ENCODE measurements at regions of chr2 and their contacts with region 1.

Region 1: DNA sequence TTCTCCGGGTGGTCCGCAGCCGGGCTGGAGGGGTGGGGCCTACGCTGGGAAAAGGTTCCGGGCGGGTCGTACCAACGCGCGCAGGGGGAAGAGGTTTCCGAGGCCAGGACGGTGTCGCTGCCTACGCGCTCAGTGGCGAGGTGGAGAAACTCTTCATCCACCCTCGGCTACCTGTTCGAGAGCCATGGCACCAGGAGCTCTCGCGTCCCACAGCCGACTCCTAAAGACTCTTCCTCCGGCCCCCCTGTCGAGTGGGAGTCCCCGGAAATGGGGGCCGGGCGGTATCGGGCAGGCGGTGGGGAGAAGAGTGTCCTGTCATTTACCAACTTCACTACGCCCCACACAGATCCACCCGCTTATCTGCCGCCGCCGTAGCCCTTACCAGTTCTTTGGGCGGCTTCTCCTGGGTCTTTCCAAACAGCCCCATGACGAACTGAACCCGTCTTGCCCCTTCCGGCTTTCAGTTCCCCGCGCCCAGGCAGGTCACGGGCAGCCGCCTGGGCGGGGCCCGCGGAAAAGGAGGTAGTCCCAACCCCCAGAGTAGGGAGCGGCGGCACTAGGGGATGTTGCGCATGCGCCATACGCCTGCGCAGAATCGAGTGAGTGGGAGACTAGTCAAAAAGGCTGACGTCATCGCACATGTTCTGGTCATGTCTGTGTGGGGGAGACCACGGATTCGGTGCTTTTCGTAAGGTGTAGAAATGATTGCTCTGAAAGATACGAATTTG is at the start of gene CHMP3:
- DNase-seq: peak; percentile 97
- H3K4me3 Mint-ChIP-seq: peak within 1 kb of the TSS; percentile 92
- H3K27ac Mint-ChIP-seq: peak within 1 kb of the TSS; percentile 99
- H3K4me1 Mint-ChIP-seq: peaks cover 25% of the 10 kb centered on the region
- H3K27me3 Mint-ChIP-seq: no peaks in the 10 kb centered on the region
- total RNA-seq, gene CHMP3: 27.0 to 29.6 TPM

Region 2: DNA sequence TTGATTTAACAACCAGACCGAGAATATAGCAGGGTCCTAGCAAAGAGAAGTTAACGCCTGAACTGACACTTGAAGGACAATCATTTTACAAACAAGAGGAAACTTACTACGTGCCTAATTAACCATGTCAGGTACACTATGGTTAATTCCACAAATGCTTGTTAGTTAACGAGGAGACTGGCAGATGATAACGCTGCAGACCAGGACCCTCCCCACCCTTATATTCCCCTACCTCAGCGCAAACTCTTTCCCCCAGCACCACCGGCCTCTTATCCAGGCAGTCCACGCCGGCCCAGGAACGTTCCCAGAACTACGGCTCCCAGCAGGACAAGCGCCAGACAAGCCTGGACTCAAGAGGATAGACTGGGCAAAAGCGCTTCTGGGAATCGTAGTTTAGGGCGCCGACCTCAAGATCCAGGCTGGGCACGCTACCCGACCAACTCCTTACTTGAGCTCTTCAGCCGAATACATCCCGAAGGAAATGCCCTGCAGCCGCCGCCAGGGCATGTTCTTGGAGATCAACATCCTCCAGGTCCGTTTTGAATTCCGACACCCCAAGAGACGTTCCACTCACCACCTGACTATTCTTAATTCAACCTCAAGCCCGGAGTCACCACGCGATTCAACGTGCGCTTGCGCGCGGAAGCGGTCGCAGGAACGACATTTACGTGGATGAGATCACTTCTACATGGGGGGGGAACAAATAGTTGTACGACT is 457.7 kb before region 1 on chr2 and contains the start of gene POLR1A:
- CTCF ChIA-PET with region 1: no interaction called
- intact Hi-C with region 1: loop called (anchors 10 kb)
- DNase-seq: peak; percentile 87
- H3K4me3 Mint-ChIP-seq: peak within 1 kb of the TSS; percentile 89
- H3K27ac Mint-ChIP-seq: peak within 1 kb of the TSS; percentile 99
- H3K4me1 Mint-ChIP-seq: peaks cover 57% of the 10 kb centered on the region
- H3K27me3 Mint-ChIP-seq: no peaks in the 10 kb centered on the region
- total RNA-seq, gene POLR1A: 25.3 to 27.1 TPM

Region 3: DNA sequence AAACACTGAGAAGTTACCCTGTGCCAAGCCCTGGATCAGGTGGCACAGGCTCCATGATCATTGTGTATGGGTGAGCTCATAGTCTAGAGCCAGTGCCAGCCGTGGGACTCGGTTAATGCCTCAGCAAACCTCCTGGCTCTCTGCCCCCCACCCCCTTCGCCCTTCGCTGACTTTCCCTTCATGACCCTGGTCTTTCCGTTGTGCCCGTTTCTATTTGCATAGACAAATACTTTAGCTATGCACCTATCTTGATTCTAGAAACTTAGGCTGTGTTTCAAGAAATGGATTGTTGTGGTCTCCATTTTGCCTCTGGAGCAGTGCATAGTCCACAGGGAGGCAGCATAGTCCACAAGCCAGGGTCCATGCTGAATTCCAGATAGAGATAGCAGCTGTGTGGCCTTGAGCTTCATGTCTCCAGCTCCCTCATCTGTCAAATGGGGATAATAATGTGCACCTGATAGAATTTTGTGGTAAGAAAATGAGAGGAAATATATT is 166.7 kb before region 1 on chr2:
- CTCF ChIA-PET with region 1: no interaction called
- intact Hi-C with region 1: loop called (anchors 5 kb)
- DNase-seq: peak; percentile 57
- H3K4me3 Mint-ChIP-seq: no peak overlapping the region
- H3K27ac Mint-ChIP-seq: peak overlapping the region; percentile 15
- H3K4me1 Mint-ChIP-seq: peaks cover 17% of the 10 kb centered on the region
- H3K27me3 Mint-ChIP-seq: no peaks in the 10 kb centered on the region

Region 4: GRCh38 chr2:86480105-86480504 is 83.0 kb before region 1 on chr2:
- CTCF ChIA-PET with region 1: no interaction called
- intact Hi-C with region 1: loop called (anchors 5 kb)
- DNase-seq: no peak
- H3K4me3 Mint-ChIP-seq: no peak overlapping the region
- H3K27ac Mint-ChIP-seq: no peak overlapping the region
- H3K4me1 Mint-ChIP-seq: peaks cover 50% of the 10 kb centered on the region
- H3K27me3 Mint-ChIP-seq: no peaks in the 10 kb centered on the region

Region 5: GRCh38 chr2:86552889-86553288 is 10.2 kb before region 1 on chr2:
- CTCF ChIA-PET with region 1: no interaction called
- intact Hi-C with region 1: loop called (anchors 1 kb)
- DNase-seq: no peak
- H3K4me3 Mint-ChIP-seq: peak overlapping the region; percentile 48
- H3K27ac Mint-ChIP-seq: peak overlapping the region; percentile 54
- H3K4me1 Mint-ChIP-seq: peaks cover 27% of the 10 kb centered on the region
- H3K27me3 Mint-ChIP-seq: no peaks in the 10 kb centered on the region